MCF 10A (cell line): ENCODE measurements at regions of chr21 and their contacts with region 1.

Region 1: GRCh38 chr21:38645282-38645681 is 147.0 kb upstream of the ERG start:
- DNase-seq: peak; percentile 43
- H3K4me3 Mint-ChIP-seq: no peak overlapping the region
- H3K27ac Mint-ChIP-seq: no peak overlapping the region
- H3K4me1 Mint-ChIP-seq: peaks cover 23% of the 10 kb centered on the region
- H3K27me3 Mint-ChIP-seq: no peaks in the 10 kb centered on the region
- CTCF ChIP-seq: no peak

Region 2: DNA sequence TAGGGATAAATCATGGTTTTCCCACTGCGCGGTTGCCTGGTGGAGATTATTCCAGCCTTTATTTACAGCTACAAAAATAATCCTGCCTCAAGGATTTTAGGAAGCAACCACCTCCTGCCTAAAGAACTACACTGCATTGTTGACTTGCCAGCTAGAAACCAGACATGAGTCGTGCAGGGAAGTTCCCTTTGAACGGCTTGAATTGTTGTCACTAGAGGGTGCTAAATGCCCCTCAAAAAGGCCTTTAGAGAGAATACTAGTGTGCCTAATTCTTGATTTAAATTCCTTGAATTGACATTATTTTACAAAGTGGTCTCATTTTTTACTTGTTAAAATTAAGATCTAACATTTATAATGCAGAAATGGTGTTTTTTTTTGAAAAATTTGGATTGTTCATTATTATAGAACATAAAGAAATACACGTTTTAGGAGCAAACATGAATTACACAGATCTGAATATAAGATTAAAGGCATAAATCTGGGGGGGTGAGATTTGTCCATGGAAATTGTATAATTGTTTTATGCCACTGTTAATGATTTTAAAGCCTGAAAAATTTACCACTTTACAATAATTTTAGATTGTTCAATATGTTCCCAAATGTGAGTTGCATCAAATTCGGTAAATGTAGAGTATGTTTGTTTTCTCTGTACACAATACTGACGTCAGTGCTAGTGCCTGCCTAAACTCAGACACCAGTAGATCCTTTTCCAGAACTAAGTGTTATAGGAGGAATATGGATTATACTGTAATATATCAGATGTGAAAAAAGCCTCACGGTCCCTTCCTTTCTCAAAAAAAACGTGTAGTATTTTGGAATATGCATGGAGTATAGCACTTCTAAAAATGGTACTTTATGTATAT is 139.4 kb before region 1 on chr21:
- CTCF ChIA-PET with region 1: no interaction called
- POLR2A ChIA-PET with region 1: no interaction called
- intact Hi-C with region 1: loop called (anchors 10 kb)
- DNase-seq: peak; percentile 81
- H3K4me3 Mint-ChIP-seq: no peak overlapping the region
- H3K27ac Mint-ChIP-seq: no peak overlapping the region
- H3K4me1 Mint-ChIP-seq: peaks cover 5% of the 10 kb centered on the region
- H3K27me3 Mint-ChIP-seq: no peaks in the 10 kb centered on the region
- CTCF ChIP-seq: peak; percentile 54